Activated CD4-positive, alpha-beta T cell treated with anti-CD3 and anti-CD28 coated beads for 36 hours (primary cell): ENCODE measurements at regions of chr2 and their contacts with region 1.

Region 1: GRCh38 chr2:218257390-218257981 is 3.3 kb upstream of the GPBAR1 start:
- DNase-seq: peak; percentile 85
- ATAC-seq: peak; percentile 75
- H3K4me3 Mint-ChIP-seq: no peak overlapping the region
- H3K27ac Mint-ChIP-seq: peak overlapping the region; percentile 81
- H3K4me1 Mint-ChIP-seq: peaks cover 38% of the 10 kb centered on the region
- H3K27me3 Mint-ChIP-seq: no peaks in the 10 kb centered on the region

Region 2: GRCh38 chr2:217978536-217979165 is 278.8 kb before region 1 on chr2:
- CTCF ChIA-PET with region 1: no interaction called
- POLR2A ChIA-PET with region 1: no interaction called
- intact Hi-C with region 1: no loop called
- DNase-seq: no peak
- ATAC-seq: no peak
- H3K4me3 Mint-ChIP-seq: no peak overlapping the region
- H3K27ac Mint-ChIP-seq: no peak overlapping the region
- H3K4me1 Mint-ChIP-seq: no peaks in the 10 kb centered on the region
- H3K27me3 Mint-ChIP-seq: no peaks in the 10 kb centered on the region

Region 3: GRCh38 chr2:218186355-218186766 is 71.1 kb before region 1 on chr2:
- CTCF ChIA-PET with region 1: interaction called, 6 read pairs
- POLR2A ChIA-PET with region 1: no interaction called
- intact Hi-C with region 1: loop called (anchors 1 kb)
- DNase-seq: peak; percentile 83
- ATAC-seq: peak; percentile 95
- H3K4me3 Mint-ChIP-seq: no peak overlapping the region
- H3K27ac Mint-ChIP-seq: no peak overlapping the region
- H3K4me1 Mint-ChIP-seq: peaks cover 8% of the 10 kb centered on the region
- H3K27me3 Mint-ChIP-seq: no peaks in the 10 kb centered on the region

Region 4: GRCh38 chr2:218224186-218224585 is 33.3 kb before region 1 on chr2:
- CTCF ChIA-PET with region 1: interaction called, 47 read pairs
- POLR2A ChIA-PET with region 1: no interaction called
- intact Hi-C with region 1: loop called in 1 of 2 experiments (anchors 2 kb)
- DNase-seq: no peak
- ATAC-seq: no peak
- H3K4me3 Mint-ChIP-seq: peak overlapping the region; percentile 38
- H3K27ac Mint-ChIP-seq: peak overlapping the region; percentile 88
- H3K4me1 Mint-ChIP-seq: peaks cover 93% of the 10 kb centered on the region
- H3K27me3 Mint-ChIP-seq: no peaks in the 10 kb centered on the region

Region 5: DNA sequence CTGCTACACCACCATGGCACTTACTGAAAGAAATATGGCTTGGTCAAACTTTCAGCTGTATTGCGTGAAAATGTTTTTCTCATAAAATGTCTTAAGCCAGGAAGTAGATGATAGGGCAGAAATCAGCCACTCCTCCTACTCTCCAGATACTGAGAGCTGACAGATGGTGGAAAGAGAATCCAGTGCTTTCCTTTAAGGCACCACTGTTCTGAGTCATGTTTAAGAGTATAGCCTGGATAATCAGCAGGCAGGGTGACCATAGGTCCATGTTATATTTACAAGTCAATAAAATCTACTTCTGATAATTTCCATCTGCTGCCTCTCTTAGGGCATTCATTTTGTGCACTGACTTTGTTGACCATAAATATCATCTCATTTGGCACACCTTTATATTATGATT is 18.6 kb before region 1 on chr2:
- CTCF ChIA-PET with region 1: interaction called, 25 read pairs
- POLR2A ChIA-PET with region 1: interaction called, 5 read pairs
- intact Hi-C with region 1: loop called in 1 of 2 experiments (anchors 1 kb)
- DNase-seq: no peak
- ATAC-seq: no peak
- H3K4me3 Mint-ChIP-seq: no peak overlapping the region
- H3K27ac Mint-ChIP-seq: peak overlapping the region; percentile 76
- H3K4me1 Mint-ChIP-seq: peaks cover 12% of the 10 kb centered on the region
- H3K27me3 Mint-ChIP-seq: no peaks in the 10 kb centered on the region

Region 6: GRCh38 chr2:218727502-218728165 is 470.1 kb after region 1 on chr2:
- CTCF ChIA-PET with region 1: no interaction called
- POLR2A ChIA-PET with region 1: no interaction called
- intact Hi-C with region 1: no loop called
- DNase-seq: peak; percentile 23
- ATAC-seq: no peak
- H3K4me3 Mint-ChIP-seq: no peak overlapping the region
- H3K27ac Mint-ChIP-seq: no peak overlapping the region
- H3K4me1 Mint-ChIP-seq: peaks cover 25% of the 10 kb centered on the region
- H3K27me3 Mint-ChIP-seq: no peaks in the 10 kb centered on the region